K562 (cell line): ENCODE measurements at regions of chr2 and their contacts with region 1.

Region 1: DNA sequence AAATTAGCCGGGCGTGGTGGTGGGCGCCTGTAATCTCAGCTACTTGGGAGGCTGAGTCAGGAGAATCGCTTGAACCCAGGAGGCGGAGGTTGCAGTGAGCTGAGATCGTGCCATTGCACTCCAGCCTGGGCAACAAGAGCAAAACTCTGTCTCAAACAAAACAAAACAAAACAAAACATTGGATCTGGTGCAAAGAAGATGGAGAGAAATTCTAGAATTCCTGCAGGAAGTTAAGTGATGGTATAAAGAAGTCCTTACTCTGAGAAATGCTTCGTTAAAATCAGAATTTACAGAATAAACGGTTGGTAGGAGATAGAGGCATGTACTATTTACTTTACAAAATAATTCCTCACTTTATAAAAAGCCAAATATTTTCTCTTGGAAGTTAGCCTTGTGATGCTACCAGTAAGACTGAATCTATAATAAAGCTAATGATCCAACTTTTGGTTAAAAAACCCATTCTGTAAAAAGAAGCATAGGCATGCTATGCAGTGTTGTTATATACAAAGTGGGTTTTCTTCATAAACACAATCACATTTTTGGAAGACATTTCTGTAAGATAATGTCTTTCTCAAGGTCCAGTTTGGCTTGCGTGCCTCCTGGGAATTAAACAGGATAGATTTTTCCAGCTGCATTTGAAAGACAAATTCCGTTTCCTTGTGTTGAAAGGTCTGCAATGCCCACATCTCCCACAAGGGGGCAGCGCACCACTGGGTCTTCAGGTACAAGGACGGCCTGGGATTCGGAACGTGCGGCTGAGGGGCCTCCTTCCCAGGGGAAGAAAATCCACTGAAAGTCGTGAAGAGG is 35.6 kb upstream of the PNO1 start:
- DNase-seq: peak; percentile 63 to 92 (median 68)
- ATAC-seq: peak; percentile 43; the same call in 2 of the 3 replicates
- H3K4me3 ChIP-seq: no peak overlapping the region
- H3K27ac ChIP-seq: no peak overlapping the region
- H3K4me1 ChIP-seq: peaks cover 5 to 31% of the 10 kb centered on the region in 2 experiments; a peak in 4 of 5 replicates
- H3K27me3 ChIP-seq: no peaks in the 10 kb centered on the region
- CTCF ChIP-seq: peak; percentile 87 to 98 (median 92)
- EP300 ChIP-seq: no peak
- POLR2A ChIP-seq: no peak
- RAD21 ChIP-seq: peak; percentile 93

Region 2: DNA sequence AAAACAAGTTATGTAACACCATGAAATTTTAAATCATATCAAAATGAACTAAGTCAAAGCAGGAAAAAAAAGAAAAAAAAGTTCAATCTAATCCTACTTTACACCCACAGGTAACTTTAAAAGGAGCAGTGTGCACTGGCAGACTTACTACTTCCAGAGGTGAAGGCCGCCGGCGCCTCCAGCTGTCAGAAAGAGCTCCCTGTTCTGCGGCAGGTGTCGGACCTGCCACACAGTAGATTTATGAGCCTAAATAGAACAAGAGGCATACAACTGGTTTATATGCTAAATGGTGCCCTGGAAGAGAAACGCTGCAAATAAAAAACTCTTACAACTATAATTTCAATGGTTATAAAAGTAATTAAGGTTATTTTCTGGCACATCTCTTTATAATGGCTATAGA is 12.5 kb after region 1 on chr2:
- CTCF ChIA-PET with region 1: interaction called, 3 read pairs
- POLR2A ChIA-PET with region 1: no interaction called
- in situ Hi-C with region 1: no loop called
- intact Hi-C with region 1: loop called (anchors 1 kb)
- DNase-seq: peak in 3 of 4 experiments; percentile 23 to 57 (median 27)
- ATAC-seq: peak; percentile 80
- H3K4me3 ChIP-seq: no peak overlapping the region
- H3K27ac ChIP-seq: no peak overlapping the region
- H3K4me1 ChIP-seq: peaks cover 7 to 25% of the 10 kb centered on the region in 2 experiments; a peak in 4 of 5 replicates
- H3K27me3 ChIP-seq: no peaks in the 10 kb centered on the region
- CTCF ChIP-seq: peak; percentile 27 to 35 (median 29); a peak in 4 of 6 replicates
- EP300 ChIP-seq: no peak
- POLR2A ChIP-seq: no peak
- RAD21 ChIP-seq: 0 out of 4 replicates have a peak, but pooled peaks have one; percentile 5 to 7

Region 3: GRCh38 chr2:68225119-68225632 is 103.1 kb after region 1 on chr2:
- CTCF ChIA-PET with region 1: no interaction called
- POLR2A ChIA-PET with region 1: no interaction called
- in situ Hi-C with region 1: no loop called
- intact Hi-C with region 1: loop called (anchors 1 kb)
- DNase-seq: peak in 3 of 4 experiments; percentile 22 to 75 (median 41)
- ATAC-seq: peak; percentile 90
- H3K4me3 ChIP-seq: no peak overlapping the region
- H3K27ac ChIP-seq: peak overlapping the region; percentile 50; the same call in 2 of the 3 replicates
- H3K4me1 ChIP-seq: peaks cover 5 to 8% of the 10 kb centered on the region in 2 experiments; a peak in 3 of 5 replicates
- H3K27me3 ChIP-seq: no peaks in the 10 kb centered on the region
- CTCF ChIP-seq: peak; percentile 52 to 62 (median 57)
- EP300 ChIP-seq: no peak
- POLR2A ChIP-seq: no peak
- RAD21 ChIP-seq: peak; percentile 29 to 70

Region 4: DNA sequence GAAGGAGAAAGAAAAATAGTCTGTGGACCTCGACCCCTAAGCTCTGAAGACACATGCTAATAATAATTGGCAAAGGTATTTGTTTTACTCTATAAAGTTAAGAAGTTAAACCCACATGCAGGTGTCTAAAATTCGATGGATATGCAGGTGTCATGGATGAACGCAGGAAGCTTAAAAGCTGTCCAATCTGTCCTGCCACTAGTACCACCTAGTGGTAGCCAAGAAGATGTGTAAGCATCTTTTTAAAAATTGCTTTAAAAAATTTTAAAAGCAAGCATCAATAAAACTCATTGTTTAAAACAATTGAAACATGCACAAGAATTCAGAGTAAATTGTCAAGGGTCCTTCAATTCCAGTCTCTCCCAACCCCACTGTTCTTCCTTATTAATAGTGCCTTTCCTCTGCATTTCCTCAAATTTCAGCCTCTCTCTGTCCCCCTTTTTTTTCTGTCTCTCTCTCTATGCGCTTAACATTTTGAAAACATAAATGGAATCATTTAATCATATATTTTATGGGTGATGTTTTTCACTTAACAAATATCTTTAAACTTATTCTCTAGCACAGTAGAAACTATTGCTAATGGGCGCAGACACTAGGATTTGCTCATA is 160.8 kb after region 1 on chr2:
- CTCF ChIA-PET with region 1: interaction called, 15 read pairs
- POLR2A ChIA-PET with region 1: no interaction called
- in situ Hi-C with region 1: no loop called
- intact Hi-C with region 1: loop called (anchors 2 kb)
- DNase-seq: peak; percentile 56 to 62 (median 58)
- ATAC-seq: peak; percentile 75
- H3K4me3 ChIP-seq: no peak overlapping the region
- H3K27ac ChIP-seq: no peak overlapping the region
- H3K4me1 ChIP-seq: peaks cover 8 to 24% of the 10 kb centered on the region in 2 experiments; a peak in 4 of 5 replicates
- H3K27me3 ChIP-seq: no peaks in the 10 kb centered on the region
- CTCF ChIP-seq: peak; percentile 71 to 87 (median 71)
- EP300 ChIP-seq: no peak
- POLR2A ChIP-seq: no peak
- RAD21 ChIP-seq: peak; percentile 67 to 78

Region 5: DNA sequence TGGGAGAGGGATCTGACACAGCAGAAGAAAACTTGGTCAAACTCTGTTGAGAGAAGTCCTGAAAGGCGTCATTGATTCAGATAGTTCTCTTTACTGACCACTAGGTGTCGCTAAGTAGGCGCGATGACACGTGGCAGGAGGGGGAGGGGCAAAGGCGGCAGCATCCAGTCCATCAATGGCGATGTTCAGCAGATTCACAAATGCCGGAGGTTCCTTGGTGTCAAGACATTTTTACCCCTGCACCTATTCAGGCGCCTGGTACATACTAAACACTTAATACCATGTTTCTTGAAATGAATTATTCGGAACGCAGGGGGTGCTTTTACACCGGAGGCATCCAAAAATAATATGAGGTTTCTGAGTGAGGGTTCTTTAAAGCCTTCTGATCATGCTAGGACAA is 240.0 kb after region 1 on chr2:
- CTCF ChIA-PET with region 1: interaction called, 3 read pairs
- POLR2A ChIA-PET with region 1: no interaction called
- in situ Hi-C with region 1: no loop called
- intact Hi-C with region 1: loop called (anchors 1 kb)
- DNase-seq: peak; percentile 79 to 88 (median 86)
- ATAC-seq: peak; percentile 82
- H3K4me3 ChIP-seq: no peak overlapping the region
- H3K27ac ChIP-seq: no peak overlapping the region; the same call in 2 of the 3 replicates
- H3K4me1 ChIP-seq: peaks cover 0 to 9% of the 10 kb centered on the region in 2 experiments; a peak in 3 of 5 replicates
- H3K27me3 ChIP-seq: no peaks in the 10 kb centered on the region
- CTCF ChIP-seq: peak; percentile 89 to 97 (median 95)
- EP300 ChIP-seq: peak; percentile 55
- POLR2A ChIP-seq: no peak
- RAD21 ChIP-seq: peak; percentile 98 to 99

Region 6: GRCh38 chr2:68411397-68412126 is 289.5 kb after region 1 on chr2:
- CTCF ChIA-PET with region 1: no interaction called
- POLR2A ChIA-PET with region 1: no interaction called
- in situ Hi-C with region 1: no loop called
- intact Hi-C with region 1: no loop called
- DNase-seq: peak in 1 of 4 experiments; percentile 28
- ATAC-seq: peak; percentile 82
- H3K4me3 ChIP-seq: no peak overlapping the region
- H3K27ac ChIP-seq: no peak overlapping the region
- H3K4me1 ChIP-seq: peaks cover 3 to 13% of the 10 kb centered on the region in 2 experiments; a peak in 3 of 5 replicates
- H3K27me3 ChIP-seq: no peaks in the 10 kb centered on the region
- CTCF ChIP-seq: no peak
- EP300 ChIP-seq: no peak
- POLR2A ChIP-seq: no peak
- RAD21 ChIP-seq: no peak